Activated T-helper 2 cell treated with anti-CD3 and anti-CD28 coated beads, Interferon-gamma antibody, Interleukin-2, Interleukin-4, amounts not matched to agents 10 μg/mL and 5 μg/mL and 100 μg/mL, durations not matched to agents 14 hours and 24 hours and 36 hours (primary cell): ENCODE measurements at regions of chr15 and their contacts with region 1.

Region 1: GRCh38 chr15:66700802-66701421 is 1.1 kb upstream of the SMAD6 start:
- DNase-seq: peak; percentile 81
- H3K4me3 Mint-ChIP-seq: peak overlapping the region; percentile 87
- H3K27ac Mint-ChIP-seq: peak overlapping the region; percentile 59
- H3K4me1 Mint-ChIP-seq: peaks cover 10% of the 10 kb centered on the region
- H3K27me3 Mint-ChIP-seq: peaks cover 21% of the 10 kb centered on the region

Region 2: DNA sequence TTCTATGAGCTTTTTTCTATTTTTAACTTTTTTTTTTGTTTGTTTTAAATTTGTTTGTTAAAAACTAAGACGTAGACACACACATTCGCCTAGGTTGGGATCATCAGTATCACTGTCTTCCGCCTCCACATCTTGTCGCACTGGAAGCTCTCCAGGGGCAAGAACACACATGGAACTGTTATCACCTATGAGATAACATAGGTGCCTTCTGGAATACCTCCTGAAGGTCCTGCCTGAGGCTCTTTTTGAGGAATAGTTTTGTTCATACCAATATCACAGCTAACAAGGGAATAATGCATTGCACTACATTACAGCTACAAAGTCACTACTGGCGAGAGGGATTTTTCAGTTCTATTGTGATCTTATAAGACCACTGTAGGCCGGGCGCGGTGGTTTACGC is 165.9 kb before region 1 on chr15:
- intact Hi-C with region 1: no loop called
- DNase-seq: no peak
- H3K4me3 Mint-ChIP-seq: no peak overlapping the region
- H3K27ac Mint-ChIP-seq: no peak overlapping the region
- H3K4me1 Mint-ChIP-seq: peaks cover 2% of the 10 kb centered on the region
- H3K27me3 Mint-ChIP-seq: no peaks in the 10 kb centered on the region

Region 3: DNA sequence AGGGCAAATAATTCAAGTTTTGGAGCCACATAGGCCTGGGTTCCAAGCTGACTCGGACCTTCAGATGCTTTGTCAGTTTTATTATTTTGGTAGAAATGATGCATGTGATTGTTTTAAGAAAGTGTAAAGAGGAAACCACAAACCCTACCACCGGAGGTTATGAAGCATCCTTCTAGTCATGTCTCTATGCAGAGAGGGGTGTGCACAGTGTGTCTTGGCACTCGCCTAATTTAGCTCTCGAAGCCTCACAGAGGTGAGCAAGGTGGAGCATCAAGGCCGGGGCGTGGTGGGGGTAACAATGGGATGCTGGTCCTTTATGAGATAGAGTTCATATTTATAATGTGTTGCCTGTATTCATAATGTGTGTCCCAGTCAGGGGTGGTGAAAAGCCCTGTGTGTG is 62.5 kb before region 1 on chr15:
- intact Hi-C with region 1: loop called (anchors 5 kb)
- DNase-seq: peak; percentile 22
- H3K4me3 Mint-ChIP-seq: no peak overlapping the region
- H3K27ac Mint-ChIP-seq: no peak overlapping the region
- H3K4me1 Mint-ChIP-seq: peaks cover 20% of the 10 kb centered on the region
- H3K27me3 Mint-ChIP-seq: no peaks in the 10 kb centered on the region

Region 4: GRCh38 chr15:66751541-66751952 is 50.6 kb after region 1 on chr15:
- intact Hi-C with region 1: no loop called
- DNase-seq: no peak
- H3K4me3 Mint-ChIP-seq: no peak overlapping the region
- H3K27ac Mint-ChIP-seq: no peak overlapping the region
- H3K4me1 Mint-ChIP-seq: peaks cover 2% of the 10 kb centered on the region
- H3K27me3 Mint-ChIP-seq: no peaks in the 10 kb centered on the region